IMR-90 (cell line): ENCODE measurements at regions of chr2 and their contacts with region 1.

Region 1: GRCh38 chr2:172465417-172466334 is 38.3 kb downstream of the ITGA6 start:
- DNase-seq: peak; percentile 89
- ATAC-seq: peak; percentile 91
- H3K4me3 ChIP-seq: peak overlapping the region; percentile 46
- H3K27ac ChIP-seq: peak overlapping the region; percentile 44
- H3K4me1 ChIP-seq: peaks cover 6% of the 10 kb centered on the region
- H3K27me3 ChIP-seq: no peaks in the 10 kb centered on the region
- CTCF ChIP-seq: peak; percentile 95
- POLR2A ChIP-seq: 0 out of 2 replicates have a peak, but pooled peaks have one; percentile 39
- RAD21 ChIP-seq: peak; percentile 97

Region 2: GRCh38 chr2:170973492-170974303 is 1492.0 kb before region 1 on chr2:
- CTCF ChIA-PET with region 1: no interaction called
- POLR2A ChIA-PET with region 1: no interaction called
- dilution Hi-C with region 1: no loop called
- in situ Hi-C with region 1: no loop called
- intact Hi-C with region 1: loop called (anchors 10 kb)
- DNase-seq: peak; percentile 66
- ATAC-seq: peak; percentile 96
- H3K4me3 ChIP-seq: peak overlapping the region; percentile 86
- H3K27ac ChIP-seq: peak overlapping the region; percentile 84
- H3K4me1 ChIP-seq: peaks cover 4% of the 10 kb centered on the region
- H3K27me3 ChIP-seq: no peaks in the 10 kb centered on the region; the same call in 1 of the 2 replicates
- CTCF ChIP-seq: peak; percentile 97
- POLR2A ChIP-seq: peak; percentile 45; the same call in 1 of the 2 replicates
- RAD21 ChIP-seq: peak; percentile 95

Region 3: DNA sequence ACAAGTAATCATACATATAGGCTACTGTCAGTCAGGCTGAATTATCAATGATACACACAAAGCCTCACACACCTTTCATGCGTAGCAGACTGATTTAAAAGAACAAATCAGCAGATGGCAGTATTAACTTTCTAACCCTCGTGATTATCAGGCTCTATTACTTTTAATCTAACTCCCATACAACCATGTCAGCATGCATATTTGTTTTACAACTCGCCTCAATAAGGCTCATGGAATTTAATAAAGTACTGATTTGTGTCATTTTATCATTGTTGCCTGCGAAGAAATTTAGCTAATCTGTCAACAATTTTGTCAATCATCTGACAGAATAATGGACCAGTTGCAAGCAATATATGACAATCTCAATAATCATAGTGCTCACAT is 654.4 kb before region 1 on chr2:
- CTCF ChIA-PET with region 1: no interaction called
- POLR2A ChIA-PET with region 1: no interaction called
- dilution Hi-C with region 1: no loop called
- in situ Hi-C with region 1: loop called (anchors 25 kb)
- intact Hi-C with region 1: no loop called
- DNase-seq: peak; percentile 57
- ATAC-seq: peak; percentile 69
- H3K4me3 ChIP-seq: no peak overlapping the region
- H3K27ac ChIP-seq: no peak overlapping the region
- H3K4me1 ChIP-seq: peaks cover 6% of the 10 kb centered on the region; the same call in 1 of the 2 replicates
- H3K27me3 ChIP-seq: no peaks in the 10 kb centered on the region
- CTCF ChIP-seq: peak; percentile 56
- POLR2A ChIP-seq: no peak
- RAD21 ChIP-seq: peak; percentile 71

Region 4: GRCh38 chr2:172131713-172132555 is 333.7 kb before region 1 on chr2:
- CTCF ChIA-PET with region 1: no interaction called
- POLR2A ChIA-PET with region 1: no interaction called
- dilution Hi-C with region 1: no loop called
- in situ Hi-C with region 1: no loop called
- intact Hi-C with region 1: loop called (anchors 5 kb)
- DNase-seq: no peak
- ATAC-seq: no peak
- H3K4me3 ChIP-seq: no peak overlapping the region
- H3K27ac ChIP-seq: no peak overlapping the region
- H3K4me1 ChIP-seq: peaks cover 2% of the 10 kb centered on the region; the same call in 1 of the 2 replicates
- H3K27me3 ChIP-seq: peaks cover 7% of the 10 kb centered on the region
- CTCF ChIP-seq: no peak
- POLR2A ChIP-seq: no peak
- RAD21 ChIP-seq: no peak

Region 5: GRCh38 chr2:172208791-172209325 is 256.8 kb before region 1 on chr2:
- CTCF ChIA-PET with region 1: interaction called, 7 read pairs
- POLR2A ChIA-PET with region 1: no interaction called
- dilution Hi-C with region 1: no loop called
- in situ Hi-C with region 1: no loop called
- intact Hi-C with region 1: loop called (anchors 2 kb)
- DNase-seq: peak; percentile 79
- ATAC-seq: peak; percentile 91
- H3K4me3 ChIP-seq: no peak overlapping the region
- H3K27ac ChIP-seq: no peak overlapping the region
- H3K4me1 ChIP-seq: peaks cover 22% of the 10 kb centered on the region
- H3K27me3 ChIP-seq: no peaks in the 10 kb centered on the region
- CTCF ChIP-seq: no peak
- POLR2A ChIP-seq: no peak
- RAD21 ChIP-seq: no peak; the same call in 1 of the 2 replicates

Region 6: DNA sequence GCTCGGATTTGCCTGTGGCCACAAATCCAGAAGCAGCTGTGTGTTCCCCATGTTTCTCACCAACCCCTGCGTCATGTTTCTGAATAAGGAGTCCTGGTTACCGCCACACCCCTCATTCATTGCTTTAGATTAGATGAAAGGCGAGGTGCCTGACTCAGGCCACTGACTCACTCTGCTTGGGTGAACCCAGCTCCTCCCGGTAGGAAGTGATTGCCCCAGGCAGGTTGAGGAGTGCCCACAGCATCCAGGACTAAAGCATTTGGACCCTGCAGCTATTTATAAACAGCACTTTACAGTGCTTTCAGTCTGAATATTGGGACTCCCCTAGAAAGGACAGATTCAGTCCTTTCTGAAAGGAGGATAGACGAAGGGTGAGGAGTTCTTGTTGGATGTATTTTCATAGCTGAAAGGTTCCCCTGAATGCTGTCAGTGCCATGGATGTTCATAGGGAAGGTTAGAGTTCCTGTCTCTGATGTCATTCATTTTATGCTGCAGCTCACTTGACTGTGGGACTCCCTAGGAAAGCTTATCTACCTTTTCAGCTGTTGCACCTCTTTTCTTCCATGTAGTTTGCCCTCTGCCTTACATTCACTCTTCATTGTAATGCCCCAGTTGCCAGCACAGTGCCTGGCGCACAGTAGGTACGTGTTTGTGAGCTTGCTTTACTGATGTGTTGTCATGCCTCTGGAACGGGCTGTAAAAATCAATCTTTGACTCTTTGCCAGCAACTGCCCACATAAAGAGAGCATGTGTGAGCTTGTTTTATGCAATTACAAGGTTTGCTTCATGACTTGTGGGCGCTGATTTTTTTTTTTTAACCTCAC is 23.4 kb before region 1 on chr2:
- CTCF ChIA-PET with region 1: interaction called, 14 read pairs
- POLR2A ChIA-PET with region 1: no interaction called
- dilution Hi-C with region 1: no loop called
- in situ Hi-C with region 1: no loop called
- intact Hi-C with region 1: no loop called
- DNase-seq: peak; percentile 97
- ATAC-seq: peak; percentile 89
- H3K4me3 ChIP-seq: no peak overlapping the region
- H3K27ac ChIP-seq: no peak overlapping the region
- H3K4me1 ChIP-seq: peaks cover 13% of the 10 kb centered on the region
- H3K27me3 ChIP-seq: no peaks in the 10 kb centered on the region
- CTCF ChIP-seq: no peak
- POLR2A ChIP-seq: no peak
- RAD21 ChIP-seq: no peak